ENCODE measurements at regions of chr2 and their contacts with region 1.

Region 1: GRCh38 chr2:137155356-137156104 is 390.2 kb downstream of the THSD7B start:
- DNase-seq: peak; percentile 30
- ATAC-seq: no peak
- H3K4me3 ChIP-seq: no peak overlapping the region
- H3K27ac ChIP-seq: no peak overlapping the region
- H3K4me1 ChIP-seq: no peaks in the 10 kb centered on the region
- H3K27me3 ChIP-seq: no peaks in the 10 kb centered on the region
- CTCF ChIP-seq: no peak

Region 2: GRCh38 chr2:136613096-136613495 is 542.4 kb before region 1 on chr2:
- CTCF ChIA-PET with region 1: no interaction called
- POLR2A ChIA-PET with region 1: no interaction called
- intact Hi-C with region 1: no loop called
- DNase-seq: no peak
- ATAC-seq: no peak
- H3K4me3 ChIP-seq: no peak overlapping the region
- H3K27ac ChIP-seq: no peak overlapping the region
- H3K4me1 ChIP-seq: no peaks in the 10 kb centered on the region
- H3K27me3 ChIP-seq: peaks cover 12% of the 10 kb centered on the region
- CTCF ChIP-seq: no peak

Region 3: DNA sequence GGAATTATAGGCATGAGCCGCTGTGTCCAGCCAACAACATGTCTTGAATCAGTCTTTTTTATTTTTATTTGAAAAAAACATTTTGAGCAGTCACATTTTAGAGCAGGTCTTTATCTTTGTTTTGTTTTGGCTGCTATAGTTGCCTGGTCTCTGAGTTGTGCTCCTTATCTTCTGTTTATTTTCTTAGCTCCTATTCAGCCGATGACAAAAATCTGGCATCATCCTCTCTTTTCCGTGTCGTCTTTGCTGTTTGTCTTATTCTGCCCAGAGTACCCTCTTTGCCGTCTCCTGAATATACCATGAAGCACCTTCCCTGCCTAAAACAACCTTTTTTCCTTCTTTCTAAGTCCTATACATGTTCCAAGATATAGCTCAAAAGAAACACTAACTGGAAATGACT is 189.0 kb before region 1 on chr2:
- CTCF ChIA-PET with region 1: no interaction called
- POLR2A ChIA-PET with region 1: no interaction called
- intact Hi-C with region 1: no loop called
- DNase-seq: no peak
- ATAC-seq: no peak
- H3K4me3 ChIP-seq: no peak overlapping the region
- H3K27ac ChIP-seq: no peak overlapping the region
- H3K4me1 ChIP-seq: no peaks in the 10 kb centered on the region
- H3K27me3 ChIP-seq: peaks cover 58% of the 10 kb centered on the region
- CTCF ChIP-seq: no peak

Region 4: DNA sequence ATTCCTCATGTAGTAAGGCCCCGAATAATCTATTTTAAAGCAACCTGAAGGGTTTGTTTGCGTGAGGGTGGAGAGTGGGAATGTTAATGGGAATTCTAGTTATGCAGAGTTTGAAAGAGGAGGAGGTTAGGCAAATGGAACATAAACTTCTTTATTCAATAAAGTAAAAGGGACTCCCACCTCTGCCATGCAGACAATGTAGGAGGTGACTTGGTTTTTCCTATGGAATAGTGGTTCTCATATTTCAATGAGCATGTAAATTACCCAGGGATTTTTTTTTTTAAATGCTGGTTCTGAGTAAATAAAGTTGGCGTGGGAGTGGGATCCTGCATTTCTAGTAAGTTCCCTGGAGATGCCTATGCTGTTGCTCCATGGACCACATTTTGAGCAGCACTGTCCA is 22.3 kb before region 1 on chr2:
- CTCF ChIA-PET with region 1: no interaction called
- POLR2A ChIA-PET with region 1: interaction called, 14 read pairs
- intact Hi-C with region 1: no loop called
- DNase-seq: no peak
- ATAC-seq: no peak
- H3K4me3 ChIP-seq: no peak overlapping the region
- H3K27ac ChIP-seq: no peak overlapping the region
- H3K4me1 ChIP-seq: no peaks in the 10 kb centered on the region
- H3K27me3 ChIP-seq: no peaks in the 10 kb centered on the region
- CTCF ChIP-seq: no peak

Region 5: GRCh38 chr2:137249463-137250130 is 94.1 kb after region 1 on chr2:
- CTCF ChIA-PET with region 1: no interaction called
- POLR2A ChIA-PET with region 1: no interaction called
- intact Hi-C with region 1: no loop called
- DNase-seq: peak; percentile 26
- ATAC-seq: no peak
- H3K4me3 ChIP-seq: no peak overlapping the region
- H3K27ac ChIP-seq: no peak overlapping the region
- H3K4me1 ChIP-seq: peaks cover 32% of the 10 kb centered on the region
- H3K27me3 ChIP-seq: no peaks in the 10 kb centered on the region
- CTCF ChIP-seq: no peak

Measured in PC-3 (cell line).